Posterior vena cava (tissue), 2 donors: ENCODE measurements at regions of chr10 and their contacts with region 1.

Region 1: DNA sequence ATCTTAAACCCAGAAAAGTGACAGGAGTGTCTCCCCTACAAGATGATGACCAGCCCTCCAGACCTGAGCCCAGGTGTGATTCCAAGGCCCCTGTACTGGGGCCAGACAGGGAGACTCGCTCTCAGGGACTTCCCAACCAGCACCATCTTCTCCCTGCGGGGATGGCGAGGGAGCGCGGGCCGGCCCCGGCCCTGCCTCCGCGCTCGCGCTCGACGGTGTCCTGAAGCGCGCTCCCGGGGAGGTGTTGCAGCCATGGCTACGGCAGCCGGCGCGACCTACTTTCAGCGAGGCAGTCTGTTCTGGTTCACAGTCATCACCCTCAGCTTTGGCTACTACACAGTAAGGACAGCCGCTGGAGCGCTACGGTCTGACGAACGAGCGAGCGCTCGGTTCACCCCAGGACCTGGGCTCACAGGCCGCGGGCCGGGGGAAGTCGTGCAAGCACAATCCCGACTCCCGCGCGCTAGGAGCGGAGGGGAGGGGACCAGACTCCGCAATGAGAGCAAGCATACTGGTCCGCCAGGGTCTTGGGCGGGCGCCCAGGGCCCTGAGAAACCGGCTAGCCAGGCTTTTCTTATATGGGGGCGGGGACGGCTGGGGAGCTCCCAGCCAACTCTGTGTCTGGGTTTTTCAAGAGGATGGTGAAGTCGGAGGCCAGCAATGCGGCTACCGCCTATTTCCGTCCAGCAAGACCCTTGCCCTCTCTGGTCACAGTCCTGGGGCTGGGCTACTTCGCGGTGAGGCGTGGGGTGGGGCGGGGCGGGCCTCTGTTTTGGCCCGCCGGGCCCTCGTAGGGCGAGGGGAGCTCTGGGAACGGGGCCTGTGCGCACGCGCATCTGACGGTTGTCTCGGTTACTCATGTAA is at the start of gene TMEM254:
- DNase-seq: peak; percentile 99
- total RNA-seq, gene TMEM254: 8.2 to 12.3 TPM

Region 2: GRCh38 chr10:80126876-80127275 is 48.2 kb after region 1 on chr10:
- intact Hi-C with region 1: loop called in 1 of 2 experiments (anchors 10 kb)
- DNase-seq: no peak

Region 3: GRCh38 chr10:80144067-80144695 is 65.5 kb after region 1 on chr10:
- intact Hi-C with region 1: loop called in 1 of 2 experiments (anchors 10 kb)
- DNase-seq: peak; percentile 78

Region 4: DNA sequence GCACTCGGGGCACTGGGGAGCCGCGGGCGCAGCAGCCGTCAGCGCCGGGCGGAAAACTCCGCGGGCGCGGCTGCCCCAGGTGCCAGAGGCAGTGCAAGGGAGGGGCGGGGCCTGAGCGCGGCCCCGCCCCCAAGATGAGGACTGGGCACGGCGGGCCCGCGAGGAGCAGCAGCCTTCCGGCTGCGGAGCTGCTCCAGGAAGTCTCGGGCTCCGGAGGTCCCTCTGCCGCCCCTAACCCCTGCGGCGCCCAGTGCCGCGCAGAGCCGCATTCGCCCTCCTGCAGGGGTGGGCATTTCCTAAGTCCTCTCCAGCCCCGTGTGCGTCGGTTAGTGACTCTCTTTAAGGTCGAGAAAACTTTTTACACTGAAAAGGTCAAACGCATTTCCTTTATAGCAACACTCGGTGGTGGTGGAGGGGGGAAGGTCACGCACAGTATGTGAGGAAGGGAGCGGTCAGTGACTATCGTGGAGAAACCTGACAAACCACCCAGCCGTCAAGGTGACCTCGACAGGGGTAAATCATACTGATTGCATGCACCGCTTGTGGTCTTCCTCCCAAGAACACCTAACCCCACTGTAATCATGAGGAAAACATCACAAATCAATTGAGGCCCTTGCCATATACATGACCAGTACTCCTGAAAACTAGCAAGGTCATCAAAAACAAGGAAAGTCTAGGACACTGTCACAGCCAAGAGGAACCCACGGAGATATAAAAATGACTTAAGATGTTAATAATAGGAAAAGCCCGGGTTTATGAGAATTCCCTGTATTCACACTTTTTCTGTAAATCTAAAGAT is 127.0 kb after region 1 on chr10 and contains the start of gene ANXA11:
- intact Hi-C with region 1: no loop called
- DNase-seq: peak; percentile 93
- total RNA-seq, gene ANXA11: 247 to 269 TPM